ENCODE measurements at regions of chr1 and their contacts with region 1.

Region 1: DNA sequence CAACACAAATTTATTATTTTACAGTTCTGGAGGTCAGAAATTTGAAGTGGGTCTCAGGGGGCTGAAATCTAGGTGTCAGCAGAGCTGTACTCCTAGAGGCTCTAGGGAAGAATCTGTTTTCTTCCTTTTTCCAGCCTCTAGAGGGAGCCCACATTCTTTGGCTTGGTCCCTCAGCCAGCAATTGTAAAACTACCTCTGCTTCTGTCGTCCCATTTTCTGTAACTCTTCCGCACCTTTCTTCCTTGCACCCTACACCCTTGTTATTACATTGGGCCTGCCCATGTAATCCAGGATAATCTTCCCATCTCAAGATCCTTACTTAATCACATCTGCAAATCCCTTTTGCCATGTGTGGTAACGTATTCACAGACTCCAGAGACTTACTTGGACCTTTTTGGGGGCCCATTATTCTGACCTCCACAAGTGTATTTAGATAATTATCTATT is 24.8 kb upstream of the THEM4 start:
- H3K4me3 ChIP-seq: no peak overlapping the region
- H3K27ac ChIP-seq: no peak overlapping the region
- H3K4me1 ChIP-seq: peaks cover 8% of the 10 kb centered on the region; the same call in 1 of the 2 replicates
- CTCF ChIP-seq: peak; percentile 85

Region 2: DNA sequence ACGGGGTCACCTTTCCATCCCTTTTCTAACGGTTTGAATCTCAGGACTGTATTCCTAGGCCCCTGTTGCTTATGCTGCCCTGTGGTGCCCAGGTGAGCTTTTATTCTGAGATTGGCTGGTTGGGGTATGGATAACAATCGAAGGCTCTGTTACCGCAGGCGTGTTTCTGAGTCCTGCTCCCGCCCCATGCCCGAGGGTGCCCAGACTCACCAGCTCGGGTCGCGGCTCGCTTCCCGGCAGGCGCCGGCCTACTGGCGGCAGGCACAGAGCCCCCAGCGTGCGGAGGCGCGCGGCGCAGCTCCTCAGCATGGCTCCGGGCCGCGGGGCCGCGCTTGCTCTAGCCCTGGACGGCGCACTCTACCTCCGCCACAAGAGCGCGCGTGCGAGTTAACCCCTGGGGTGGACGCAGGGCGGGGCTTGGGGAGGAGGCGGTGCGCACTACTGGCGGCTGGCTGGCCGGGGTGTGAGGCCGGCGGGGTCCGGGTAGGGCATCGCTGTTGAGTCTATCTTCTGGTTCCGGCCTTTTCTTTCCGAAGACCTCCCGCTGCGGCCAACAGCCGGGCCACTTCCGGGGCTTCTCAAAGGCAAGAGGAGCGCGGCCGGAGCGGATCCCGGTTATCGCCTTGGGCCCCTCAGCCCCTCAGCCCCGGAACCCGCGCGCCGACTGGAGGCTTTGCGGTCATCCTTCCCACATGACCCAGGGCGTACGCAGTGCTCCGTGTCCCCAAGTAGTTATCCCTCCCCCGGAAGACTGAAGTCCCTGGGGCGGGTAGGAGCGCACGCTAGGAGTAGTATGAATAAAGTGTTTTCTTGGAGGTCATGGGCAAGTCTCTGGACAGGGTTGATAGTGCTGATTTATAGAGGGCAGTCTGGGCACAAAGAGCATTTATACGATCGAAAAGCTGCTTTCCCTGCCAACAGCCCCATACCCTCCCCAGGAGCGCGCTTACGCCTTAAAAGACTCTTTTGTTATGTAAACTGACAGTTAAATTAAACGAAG is 24.6 kb before region 1 on chr1 and contains the start of gene THEM4:
- CTCF ChIA-PET with region 1: interaction called, 12 read pairs
- POLR2A ChIA-PET with region 1: no interaction called
- H3K4me3 ChIP-seq: peak within 1 kb of the TSS; percentile 58
- H3K27ac ChIP-seq: peak within 1 kb of the TSS; percentile 35
- H3K4me1 ChIP-seq: no peaks in the 10 kb centered on the region
- CTCF ChIP-seq: peak; percentile 82

Region 3: GRCh38 chr1:151968058-151968457 is 34.0 kb after region 1 on chr1:
- CTCF ChIA-PET with region 1: interaction called, 122 read pairs
- POLR2A ChIA-PET with region 1: no interaction called
- H3K4me3 ChIP-seq: no peak overlapping the region
- H3K27ac ChIP-seq: no peak overlapping the region; the same call in 1 of the 2 replicates
- H3K4me1 ChIP-seq: peaks cover 8% of the 10 kb centered on the region; the same call in 1 of the 2 replicates
- CTCF ChIP-seq: peak; percentile 91

Region 4: GRCh38 chr1:151993654-151994496 is 59.8 kb after region 1 on chr1 and contains the start of gene S100A10:
- CTCF ChIA-PET with region 1: interaction called, 301 read pairs
- POLR2A ChIA-PET with region 1: interaction called, 7 read pairs
- H3K4me3 ChIP-seq: peak within 1 kb of the TSS; percentile 79
- H3K27ac ChIP-seq: peak within 1 kb of the TSS; percentile 90
- H3K4me1 ChIP-seq: peaks cover 35% of the 10 kb centered on the region
- CTCF ChIP-seq: peak; percentile 27; the same call in 1 of the 2 replicates

Region 5: DNA sequence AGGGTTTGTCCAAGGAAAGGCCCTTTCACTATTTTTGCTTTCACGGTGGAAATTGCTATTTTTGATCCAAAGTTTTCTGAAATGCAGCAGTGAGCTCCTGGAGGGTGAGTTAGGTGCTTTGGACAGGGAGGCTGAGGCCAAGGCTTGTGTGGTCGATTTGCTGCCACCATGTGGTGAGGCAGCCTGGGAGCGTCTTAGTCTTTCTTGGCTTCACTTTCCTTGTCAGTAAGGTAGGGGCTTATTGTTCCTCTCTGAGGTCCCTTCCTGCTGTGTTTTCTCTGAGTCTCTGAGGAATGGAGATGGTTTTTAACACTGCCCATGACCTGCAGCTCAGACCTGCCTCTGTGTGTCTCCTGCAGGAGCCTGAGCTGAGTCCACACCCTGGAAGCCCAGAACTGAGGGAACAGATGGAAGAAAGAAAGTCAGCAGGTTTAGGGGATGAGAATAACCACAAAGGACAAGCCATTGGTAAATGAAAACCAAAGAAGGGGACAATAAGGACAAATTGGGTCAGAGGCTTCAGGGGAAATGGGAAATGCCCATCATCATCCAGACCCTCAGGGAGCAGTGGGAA is 79.7 kb after region 1 on chr1:
- CTCF ChIA-PET with region 1: interaction called, 43 read pairs
- POLR2A ChIA-PET with region 1: no interaction called
- H3K4me3 ChIP-seq: no peak overlapping the region
- H3K27ac ChIP-seq: no peak overlapping the region
- H3K4me1 ChIP-seq: no peaks in the 10 kb centered on the region
- CTCF ChIP-seq: peak; percentile 51; the same call in 1 of the 2 replicates

Region 6: DNA sequence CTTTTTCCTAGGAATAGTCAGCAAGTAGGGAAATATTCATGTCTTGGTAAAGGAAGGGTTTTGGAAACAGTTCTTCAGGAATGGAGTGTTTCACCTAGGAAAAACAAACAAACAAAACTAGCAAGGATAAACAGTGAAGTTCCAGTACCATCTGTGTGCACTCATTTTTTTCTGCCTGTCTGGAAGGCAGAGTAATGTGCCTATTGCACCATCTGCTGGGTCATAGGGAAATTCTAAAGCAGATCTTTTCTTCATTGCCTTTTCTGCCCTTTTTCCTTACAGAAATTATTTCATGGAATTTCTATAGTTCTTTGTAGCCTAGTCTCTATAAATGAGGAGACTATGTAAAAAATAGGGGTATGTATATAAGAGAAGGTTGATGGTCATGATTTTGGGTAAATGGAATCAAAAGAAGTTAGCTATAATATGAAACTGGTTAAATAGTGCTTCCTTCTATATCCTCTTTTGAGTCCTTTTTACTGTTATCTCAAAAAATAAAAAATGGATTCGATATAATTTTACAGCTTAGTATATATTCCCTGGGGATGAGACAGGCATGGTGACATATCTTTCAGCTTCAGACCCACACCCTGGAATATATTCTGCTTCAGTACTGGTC is 293.3 kb after region 1 on chr1:
- CTCF ChIA-PET with region 1: no interaction called
- POLR2A ChIA-PET with region 1: no interaction called
- H3K4me3 ChIP-seq: no peak overlapping the region
- H3K27ac ChIP-seq: no peak overlapping the region
- H3K4me1 ChIP-seq: no peaks in the 10 kb centered on the region
- CTCF ChIP-seq: no peak